AG04449 (cell line): ENCODE measurements at regions of chr2 and their contacts with region 1.

Region 1: GRCh38 chr2:96174251-96175144 is 29.3 kb upstream of the DUSP2 start:
- DNase-seq: no peak
- H3K4me3 ChIP-seq: no peak overlapping the region
- CTCF ChIP-seq: peak; percentile 94

Region 2: DNA sequence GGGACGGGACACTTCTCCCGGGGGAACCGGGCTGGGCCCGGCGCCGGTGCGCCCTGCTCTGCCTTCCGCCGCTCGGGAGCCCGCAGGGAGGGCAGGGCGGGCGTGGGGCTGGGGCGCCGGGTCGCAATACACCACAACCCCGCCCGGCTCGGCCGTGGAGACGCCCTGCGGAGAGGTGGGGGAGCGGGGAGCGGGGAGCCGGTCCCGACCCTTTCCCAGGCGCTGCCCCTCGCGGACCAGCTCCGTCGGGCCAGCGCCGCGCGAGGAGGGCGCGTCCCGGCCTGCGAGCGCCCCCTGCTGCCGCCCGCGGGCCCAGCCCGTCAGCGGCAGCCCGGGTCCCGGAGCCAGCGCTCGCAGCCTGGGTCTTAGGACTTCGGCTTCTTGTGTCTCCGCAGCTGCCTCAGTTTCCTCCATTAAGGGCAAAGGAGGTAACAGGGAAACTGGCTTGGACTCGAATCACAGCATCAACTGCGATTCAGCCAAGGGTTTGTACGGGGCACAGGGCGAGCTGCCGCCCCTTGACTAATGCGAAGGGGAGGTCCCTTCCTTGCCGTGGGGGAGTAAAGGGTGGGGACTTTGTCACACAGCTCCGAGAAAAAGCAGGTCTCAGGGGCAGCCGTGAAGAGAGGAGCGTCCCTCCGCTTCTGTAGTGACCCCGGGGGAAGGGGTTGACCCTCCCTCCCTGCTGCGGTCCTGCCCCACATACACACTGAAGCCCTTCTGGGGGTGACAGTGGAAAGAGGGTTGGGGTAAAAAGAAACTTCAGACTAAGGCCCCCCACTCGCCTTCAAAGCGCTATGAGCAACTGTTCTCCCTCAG is 57.4 kb before region 1 on chr2:
- CTCF ChIA-PET with region 1: interaction called, 24 read pairs
- POLR2A ChIA-PET with region 1: no interaction called
- DNase-seq: no peak
- H3K4me3 ChIP-seq: peak overlapping the region; percentile 32
- CTCF ChIP-seq: peak; percentile 43

Region 3: DNA sequence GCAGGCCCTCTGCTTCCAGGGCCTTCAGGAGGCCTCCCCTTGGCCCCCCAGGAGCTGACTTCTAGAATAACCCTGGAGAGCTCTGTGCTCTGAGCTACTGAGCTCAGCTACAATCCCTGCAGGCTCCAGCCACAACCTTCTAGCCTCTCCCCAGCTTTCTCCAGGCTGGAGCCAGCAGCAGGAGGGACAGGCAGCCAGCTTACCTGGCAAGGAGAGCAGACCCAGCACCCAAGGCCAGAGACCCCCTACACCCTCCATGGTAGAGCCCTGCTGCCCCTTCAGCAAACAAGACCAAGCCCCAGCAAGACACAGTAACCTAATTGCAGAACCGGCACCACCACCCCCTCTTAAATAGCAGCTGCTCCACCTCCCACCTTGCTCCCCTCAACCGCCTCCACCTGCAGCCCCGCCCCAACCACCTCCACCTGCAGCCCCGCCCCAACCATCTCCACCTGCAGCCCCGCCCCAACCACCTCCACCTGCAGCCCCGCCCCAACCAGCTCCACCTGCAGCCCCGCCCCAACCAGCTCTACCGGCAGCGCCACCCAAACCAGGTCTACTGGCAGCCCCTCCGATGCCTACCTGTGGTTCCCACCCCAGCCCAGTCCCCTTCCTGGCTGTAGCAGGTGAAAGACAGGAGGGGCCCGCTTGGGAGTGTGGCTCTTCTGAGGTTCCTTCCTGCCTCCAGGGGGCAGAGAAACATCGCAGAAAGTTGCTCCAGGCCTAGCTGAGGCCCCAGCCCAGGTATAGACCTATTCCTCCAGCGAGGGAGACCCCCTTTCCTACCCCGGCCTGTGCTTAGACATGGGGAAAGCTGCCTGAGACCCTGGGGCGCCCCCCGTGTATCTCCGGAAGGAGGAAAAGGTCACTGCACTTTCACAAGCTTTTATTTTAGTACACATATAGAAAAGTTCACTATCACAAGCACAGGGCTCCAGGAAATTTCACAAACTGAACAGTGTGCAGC is 36.0 kb before region 1 on chr2 and contains the start of gene ASTL:
- CTCF ChIA-PET with region 1: interaction called, 228 read pairs
- POLR2A ChIA-PET with region 1: interaction called, 4 read pairs
- DNase-seq: no peak
- H3K4me3 ChIP-seq: no peak within 1 kb of the TSS
- CTCF ChIP-seq: peak; percentile 68

Region 4: GRCh38 chr2:96152301-96153165 is 22.0 kb before region 1 on chr2:
- CTCF ChIA-PET with region 1: interaction called, 31 read pairs
- POLR2A ChIA-PET with region 1: no interaction called
- DNase-seq: no peak
- H3K4me3 ChIP-seq: no peak overlapping the region
- CTCF ChIP-seq: no peak

Region 5: GRCh38 chr2:96195410-96196066 is 21.0 kb after region 1 on chr2:
- CTCF ChIA-PET with region 1: interaction called, 12 read pairs
- POLR2A ChIA-PET with region 1: interaction called, 3 read pairs
- DNase-seq: peak; percentile 81
- H3K4me3 ChIP-seq: no peak overlapping the region
- CTCF ChIP-seq: no peak

Region 6: GRCh38 chr2:96260404-96261260 is 86.1 kb after region 1 on chr2:
- CTCF ChIA-PET with region 1: interaction called, 16 read pairs
- POLR2A ChIA-PET with region 1: no interaction called
- DNase-seq: peak; percentile 37
- H3K4me3 ChIP-seq: no peak overlapping the region
- CTCF ChIP-seq: peak; percentile 27